Caco-2 (cell line): ENCODE measurements at regions of chr12 and their contacts with region 1.

Region 1: GRCh38 chr12:62866451-62867082 is 68.4 kb downstream of the PPM1H start:
- DNase-seq: peak; percentile 76 to 86
- H3K4me3 ChIP-seq: no peak overlapping the region
- H3K4me3 Mint-ChIP-seq: peak overlapping the region; percentile 56
- H3K27ac Mint-ChIP-seq: peak overlapping the region; percentile 89
- H3K4me1 ChIP-seq: peaks cover 91% of the 10 kb centered on the region
- H3K4me1 Mint-ChIP-seq: peaks cover 46% of the 10 kb centered on the region
- H3K27me3 ChIP-seq: no peaks in the 10 kb centered on the region
- H3K27me3 Mint-ChIP-seq: no peaks in the 10 kb centered on the region
- CTCF ChIP-seq: no peak

Region 2: GRCh38 chr12:62841846-62842245 is 24.7 kb before region 1 on chr12:
- CTCF ChIA-PET with region 1: interaction called, 4 read pairs
- POLR2A ChIA-PET with region 1: no interaction called
- intact Hi-C with region 1: loop called (anchors 1 kb)
- DNase-seq: no peak
- H3K4me3 ChIP-seq: no peak overlapping the region
- H3K4me3 Mint-ChIP-seq: no peak overlapping the region
- H3K27ac Mint-ChIP-seq: peak overlapping the region; percentile 22
- H3K4me1 ChIP-seq: peaks cover 79% of the 10 kb centered on the region
- H3K4me1 Mint-ChIP-seq: peaks cover 41% of the 10 kb centered on the region
- H3K27me3 ChIP-seq: no peaks in the 10 kb centered on the region
- H3K27me3 Mint-ChIP-seq: no peaks in the 10 kb centered on the region
- CTCF ChIP-seq: no peak

Region 3: DNA sequence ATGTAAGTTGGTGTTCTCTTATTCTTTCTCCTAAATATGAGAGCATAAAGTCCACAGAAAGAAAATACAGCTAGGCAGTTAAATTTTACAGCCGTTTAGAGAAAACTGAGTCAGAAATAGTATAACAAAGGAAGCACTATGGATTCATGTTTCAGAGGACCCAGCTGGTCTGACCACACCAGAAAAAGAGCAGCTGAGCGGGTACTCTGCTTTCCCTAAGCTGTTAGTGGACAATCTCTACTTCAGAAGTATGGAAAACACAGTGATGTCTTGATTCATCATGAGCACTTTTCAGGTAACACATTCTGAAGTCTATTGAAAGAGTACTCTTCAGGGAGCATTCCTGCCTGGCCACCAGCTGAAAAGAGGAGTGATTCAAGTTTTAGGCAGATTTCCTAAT is 56.0 kb after region 1 on chr12:
- CTCF ChIA-PET with region 1: no interaction called
- POLR2A ChIA-PET with region 1: no interaction called
- intact Hi-C with region 1: no loop called
- DNase-seq: no peak
- H3K4me3 ChIP-seq: no peak overlapping the region
- H3K4me3 Mint-ChIP-seq: no peak overlapping the region
- H3K27ac Mint-ChIP-seq: no peak overlapping the region
- H3K4me1 ChIP-seq: peaks cover 17% of the 10 kb centered on the region
- H3K4me1 Mint-ChIP-seq: peaks cover 14% of the 10 kb centered on the region
- H3K27me3 ChIP-seq: no peaks in the 10 kb centered on the region
- H3K27me3 Mint-ChIP-seq: no peaks in the 10 kb centered on the region
- CTCF ChIP-seq: no peak

Region 4: DNA sequence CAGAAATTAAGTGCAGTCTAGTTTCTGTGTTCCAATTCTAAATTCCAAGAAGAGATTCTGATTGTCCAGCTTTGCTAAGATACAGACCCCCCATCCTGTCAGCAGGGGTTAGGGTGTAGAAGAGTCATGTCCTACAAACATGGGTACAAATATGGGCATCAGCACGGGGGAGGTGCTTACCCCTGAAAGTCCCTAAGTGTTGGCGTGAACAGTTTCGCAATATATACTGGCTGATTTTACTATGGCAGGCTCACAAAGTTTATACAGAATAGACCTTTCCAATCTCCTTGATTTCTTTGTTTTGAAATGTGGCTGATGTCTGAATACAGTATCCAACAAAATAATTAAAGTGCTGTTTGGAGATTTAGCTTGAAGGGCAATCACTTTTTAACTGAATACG is 140.0 kb after region 1 on chr12:
- CTCF ChIA-PET with region 1: no interaction called
- POLR2A ChIA-PET with region 1: no interaction called
- intact Hi-C with region 1: loop called (anchors 2 kb)
- DNase-seq: peak; percentile 48 to 55
- H3K4me3 ChIP-seq: no peak overlapping the region
- H3K4me3 Mint-ChIP-seq: peak overlapping the region; percentile 4
- H3K27ac Mint-ChIP-seq: peak overlapping the region; percentile 87
- H3K4me1 ChIP-seq: peaks cover 59% of the 10 kb centered on the region
- H3K4me1 Mint-ChIP-seq: peaks cover 34% of the 10 kb centered on the region
- H3K27me3 ChIP-seq: no peaks in the 10 kb centered on the region
- H3K27me3 Mint-ChIP-seq: no peaks in the 10 kb centered on the region
- CTCF ChIP-seq: no peak